SK-N-SH (cell line): ENCODE measurements at regions of chr9 and their contacts with region 1.

Region 1: DNA sequence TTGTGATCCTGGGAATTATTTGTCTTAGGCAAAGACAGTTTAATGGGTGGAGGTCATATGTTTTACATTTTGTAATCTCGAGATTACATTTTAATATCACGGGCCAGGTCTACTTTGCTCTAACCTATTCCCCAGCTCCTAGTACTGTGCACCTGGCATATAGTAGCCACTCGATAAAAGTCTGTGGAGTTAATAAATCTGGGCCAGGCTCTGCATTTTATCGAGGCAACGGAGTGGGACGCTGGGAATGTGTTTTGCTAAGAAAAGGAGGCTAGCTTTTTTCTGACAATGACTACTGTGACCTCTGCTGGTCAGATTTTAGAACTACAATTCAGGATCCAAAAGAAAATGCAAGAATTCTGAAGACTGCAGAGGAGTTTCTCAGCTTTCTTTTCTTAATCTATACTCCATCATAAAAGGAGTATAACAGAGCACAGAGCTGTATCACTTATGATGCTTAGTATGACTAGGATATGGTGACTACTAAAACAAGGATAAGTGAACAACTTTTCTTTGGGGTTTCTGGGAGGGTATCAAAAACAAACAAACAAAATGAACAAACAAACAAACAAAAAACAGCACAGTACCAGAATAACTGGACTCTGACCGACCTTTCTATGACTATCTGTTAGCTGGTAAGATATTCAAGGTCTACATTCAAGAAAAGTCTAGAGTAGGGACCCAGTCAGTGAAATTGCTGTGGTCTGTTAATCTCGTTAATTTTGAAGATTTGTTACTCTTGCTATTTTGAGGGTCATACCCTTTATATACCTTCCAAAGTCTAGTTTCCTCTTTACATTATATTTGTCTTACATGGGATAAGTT is 46.1 kb upstream of the CER1 start:
- DNase-seq: peak; percentile 44
- H3K4me3 ChIP-seq: no peak overlapping the region; a peak in 1 of 4 replicates
- H3K27ac ChIP-seq: no peak overlapping the region; a peak in 1 of 4 replicates
- H3K4me1 ChIP-seq: peaks cover 0 to 6% of the 10 kb centered on the region in 2 experiments; a peak in 1 of 4 replicates
- H3K27me3 ChIP-seq: no peaks in the 10 kb centered on the region
- CTCF ChIP-seq: peak; percentile 77
- EP300 ChIP-seq: no peak
- RAD21 ChIP-seq: peak; percentile 88

Region 2: GRCh38 chr9:13033959-13034693 is 1734.5 kb before region 1 on chr9:
- CTCF ChIA-PET with region 1: interaction called, 14 read pairs
- POLR2A ChIA-PET with region 1: no interaction called
- DNase-seq: peak; percentile 87
- H3K4me3 ChIP-seq: peak overlapping the region; percentile 24 to 56
- H3K27ac ChIP-seq: no peak overlapping the region; a peak in 1 of 4 replicates
- H3K4me1 ChIP-seq: peaks cover 0 to 2% of the 10 kb centered on the region in 2 experiments; a peak in 1 of 4 replicates
- H3K27me3 ChIP-seq: no peaks in the 10 kb centered on the region
- CTCF ChIP-seq: peak; percentile 85
- EP300 ChIP-seq: no peak
- RAD21 ChIP-seq: peak; percentile 93

Region 3: GRCh38 chr9:14661421-14662059 is 107.1 kb before region 1 on chr9:
- CTCF ChIA-PET with region 1: interaction called, 18 read pairs
- POLR2A ChIA-PET with region 1: no interaction called
- DNase-seq: peak; percentile 58
- H3K4me3 ChIP-seq: no peak overlapping the region
- H3K27ac ChIP-seq: no peak overlapping the region
- H3K4me1 ChIP-seq: no peaks in the 10 kb centered on the region; a peak in 1 of 4 replicates
- H3K27me3 ChIP-seq: no peaks in the 10 kb centered on the region
- CTCF ChIP-seq: peak; percentile 71
- EP300 ChIP-seq: no peak
- RAD21 ChIP-seq: peak; percentile 78

Region 4: DNA sequence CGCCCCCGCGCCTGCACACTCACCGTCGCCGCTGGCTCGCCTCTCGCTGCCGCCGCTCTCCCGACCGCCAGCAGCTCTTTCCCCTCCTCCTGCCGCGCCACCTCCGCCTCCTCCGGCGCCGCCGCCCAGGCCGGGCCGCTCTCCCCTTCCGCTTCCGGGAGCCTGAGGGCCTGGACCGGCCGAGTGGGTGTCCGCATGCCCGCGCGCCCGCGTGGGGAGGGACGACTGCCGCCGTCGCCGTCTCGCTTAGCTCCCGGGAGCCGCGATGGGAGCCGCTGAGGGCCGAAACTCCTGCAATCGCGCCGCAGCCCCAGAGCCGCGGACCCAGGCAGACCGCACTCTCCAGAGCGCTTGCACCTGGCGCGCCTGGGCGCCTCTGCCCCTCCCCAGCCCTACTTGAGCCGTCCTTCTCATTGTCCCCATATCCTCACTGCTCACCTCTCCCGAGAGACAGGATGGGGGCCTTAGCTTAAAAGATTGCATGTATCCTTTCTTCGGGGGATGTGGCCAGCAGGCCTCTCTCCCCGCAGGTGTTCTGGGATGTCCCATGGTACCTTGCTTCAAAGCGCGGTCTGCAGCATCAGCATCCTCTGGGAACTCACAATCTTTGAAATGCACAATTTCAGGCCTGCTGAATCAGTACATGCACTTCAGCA is 75.3 kb before region 1 on chr9 and contains the start of gene ZDHHC21:
- CTCF ChIA-PET with region 1: interaction called, 21 read pairs
- POLR2A ChIA-PET with region 1: interaction called, 3 read pairs
- DNase-seq: peak; percentile 91
- H3K4me3 ChIP-seq: peak within 1 kb of the TSS; percentile 82 to 93
- H3K27ac ChIP-seq: peak within 1 kb of the TSS in 1 of 2 experiments; percentile 93; a peak in 2 of 4 replicates
- H3K4me1 ChIP-seq: peaks cover 8 to 13% of the 10 kb centered on the region in 2 experiments; a peak in 3 of 4 replicates
- H3K27me3 ChIP-seq: no peaks in the 10 kb centered on the region
- CTCF ChIP-seq: no peak
- EP300 ChIP-seq: no peak
- RAD21 ChIP-seq: no peak
- polyA plus RNA-seq, gene ZDHHC21: 2.9 and 4.3 TPM in 2 replicates

Region 5: GRCh38 chr9:14752271-14752670 is 16.3 kb before region 1 on chr9:
- CTCF ChIA-PET with region 1: interaction called, 36 read pairs
- POLR2A ChIA-PET with region 1: no interaction called
- DNase-seq: no peak
- H3K4me3 ChIP-seq: no peak overlapping the region
- H3K27ac ChIP-seq: peak overlapping the region in 1 of 2 experiments; percentile 58; a peak in 2 of 4 replicates
- H3K4me1 ChIP-seq: peaks cover 0 to 9% of the 10 kb centered on the region in 2 experiments; a peak in 2 of 4 replicates
- H3K27me3 ChIP-seq: no peaks in the 10 kb centered on the region; the same call in 1 of the 2 replicates
- CTCF ChIP-seq: no peak
- EP300 ChIP-seq: no peak
- RAD21 ChIP-seq: no peak

Region 6: GRCh38 chr9:15135164-15135792 is 366.7 kb after region 1 on chr9:
- CTCF ChIA-PET with region 1: interaction called, 22 read pairs
- POLR2A ChIA-PET with region 1: no interaction called
- DNase-seq: peak; percentile 82
- H3K4me3 ChIP-seq: peak overlapping the region; percentile 28 to 50; a peak in 3 of 4 replicates
- H3K27ac ChIP-seq: peak overlapping the region in 1 of 2 experiments; percentile 23; a peak in 1 of 4 replicates
- H3K4me1 ChIP-seq: peaks cover 0 to 3% of the 10 kb centered on the region in 2 experiments; a peak in 1 of 4 replicates
- H3K27me3 ChIP-seq: no peaks in the 10 kb centered on the region
- CTCF ChIP-seq: peak; percentile 81
- EP300 ChIP-seq: peak in 1 of 2 experiments; percentile 10; a peak in 1 of 4 replicates
- RAD21 ChIP-seq: peak; percentile 96